ENCODE measurements at regions of chr3 and their contacts with region 1.

Region 1: GRCh38 chr3:32821686-32822296 is 4.0 kb downstream of the TRIM71 start:
- DNase-seq: no peak
- ATAC-seq: no peak
- H3K4me3 ChIP-seq: no peak overlapping the region
- H3K27ac ChIP-seq: no peak overlapping the region
- H3K4me1 ChIP-seq: no peaks in the 10 kb centered on the region
- H3K27me3 ChIP-seq: no peaks in the 10 kb centered on the region
- CTCF ChIP-seq: no peak

Region 2: DNA sequence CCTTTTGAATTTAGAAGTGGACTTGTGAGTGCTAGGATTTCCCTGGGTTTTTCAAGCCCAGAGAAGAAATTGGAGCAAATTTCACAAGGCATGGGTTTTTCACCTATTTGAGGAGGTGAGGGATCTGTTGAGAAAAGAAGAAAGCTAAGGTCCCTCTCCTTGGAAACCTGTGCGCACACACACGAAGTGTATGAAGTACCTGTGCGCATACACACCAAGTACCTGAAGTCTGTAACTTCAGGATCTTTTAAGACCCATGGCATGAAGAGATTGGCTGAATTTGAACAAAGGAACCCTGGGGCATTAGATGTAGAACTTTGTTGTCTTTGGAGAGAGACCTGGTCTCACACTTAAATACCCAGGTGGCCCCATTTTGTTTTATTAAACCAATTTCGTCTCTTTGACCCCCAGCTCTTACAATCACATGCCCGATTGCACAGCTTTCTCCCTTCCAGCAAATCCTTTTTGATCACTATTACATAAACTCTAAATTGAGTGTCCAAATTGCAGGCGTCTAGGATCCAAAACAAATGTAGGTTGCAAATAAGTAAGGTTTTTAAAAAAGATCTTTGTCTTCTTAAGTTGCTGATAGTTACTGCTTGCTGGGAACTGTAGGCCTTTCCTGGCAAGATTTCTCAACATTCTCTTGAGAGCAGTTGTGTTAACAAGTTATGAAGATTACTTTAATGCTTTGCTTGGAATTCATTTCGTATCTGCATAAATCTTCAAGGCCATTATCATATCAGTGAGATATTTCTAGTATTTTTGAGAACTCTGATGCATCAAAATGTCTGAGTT is 519.0 kb before region 1 on chr3:
- CTCF ChIA-PET with region 1: no interaction called
- POLR2A ChIA-PET with region 1: no interaction called
- intact Hi-C with region 1: no loop called
- DNase-seq: no peak
- ATAC-seq: no peak
- H3K4me3 ChIP-seq: no peak overlapping the region
- H3K27ac ChIP-seq: no peak overlapping the region
- H3K4me1 ChIP-seq: no peaks in the 10 kb centered on the region
- H3K27me3 ChIP-seq: no peaks in the 10 kb centered on the region
- CTCF ChIP-seq: no peak

Region 3: DNA sequence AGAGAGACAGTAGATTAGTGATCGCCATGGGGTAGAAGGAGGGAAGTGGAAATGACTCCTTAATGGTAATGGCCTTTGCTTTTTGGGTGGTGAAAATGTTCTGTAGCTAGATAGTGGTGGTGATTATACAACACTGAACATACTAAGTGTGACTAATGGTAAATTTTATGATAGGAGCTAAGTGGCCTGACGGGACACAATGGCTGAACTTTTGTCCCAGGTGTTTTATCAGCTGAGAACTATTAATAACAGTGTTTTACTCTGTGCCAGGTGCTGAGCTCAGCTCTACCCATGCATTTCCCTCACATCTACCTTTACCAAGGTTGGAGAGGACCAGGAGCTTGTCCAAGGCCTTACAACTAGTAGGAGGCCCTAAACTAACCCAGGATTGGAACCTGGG is 62.8 kb after region 1 on chr3:
- CTCF ChIA-PET with region 1: no interaction called
- POLR2A ChIA-PET with region 1: interaction called, 25 read pairs
- intact Hi-C with region 1: no loop called
- DNase-seq: no peak
- ATAC-seq: no peak
- H3K4me3 ChIP-seq: no peak overlapping the region
- H3K27ac ChIP-seq: no peak overlapping the region
- H3K4me1 ChIP-seq: peaks cover 13% of the 10 kb centered on the region
- H3K27me3 ChIP-seq: no peaks in the 10 kb centered on the region
- CTCF ChIP-seq: no peak